ENCODE measurements at regions of chr3 and their contacts with region 1.

Region 1: GRCh38 chr3:194315088-194315964 is 35.8 kb downstream of the CPN2 start:
- DNase-seq: peak; percentile 67 to 97
- H3K4me3 ChIP-seq: peak overlapping the region; percentile 21
- CTCF ChIP-seq: peak in 1 of 3 donors; percentile 67
- POLR2A ChIP-seq: no peak

Region 2: DNA sequence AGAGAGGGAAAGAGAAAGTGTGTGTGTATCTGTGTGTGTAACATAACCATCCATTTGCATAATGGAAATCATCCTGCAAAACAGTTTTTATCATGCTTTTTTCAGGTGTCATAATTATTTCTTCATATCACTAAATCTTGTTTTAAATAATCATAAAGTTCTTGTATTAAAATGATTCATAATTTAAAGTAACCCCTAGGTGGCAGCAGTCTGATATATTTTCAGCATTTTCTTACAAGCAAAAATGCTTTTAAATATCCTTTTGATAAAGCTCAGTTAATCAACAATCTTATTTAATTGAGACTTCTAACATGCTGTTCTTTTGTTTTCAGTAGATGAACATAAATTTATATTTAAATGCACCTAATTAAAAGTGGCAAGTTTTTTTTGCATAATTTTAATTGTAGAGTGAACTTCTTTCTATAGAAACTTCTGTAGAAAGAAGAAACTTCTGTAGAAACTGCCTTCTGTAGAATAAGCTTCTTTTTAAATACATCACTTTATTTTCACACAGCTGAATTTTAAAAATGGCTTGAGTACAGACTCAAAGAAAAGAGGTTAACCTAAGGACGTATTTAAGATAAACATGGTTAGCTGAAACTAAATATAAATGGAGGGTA is 649.8 kb before region 1 on chr3:
- intact Hi-C with region 1: loop called (anchors 10 kb)
- DNase-seq: no peak
- H3K4me3 ChIP-seq: no peak overlapping the region
- CTCF ChIP-seq: no peak
- POLR2A ChIP-seq: no peak

Region 3: GRCh38 chr3:193780810-193781472 is 534.4 kb before region 1 on chr3:
- intact Hi-C with region 1: loop called (anchors 5 kb)
- DNase-seq: peak; percentile 62 to 91
- H3K4me3 ChIP-seq: no peak overlapping the region
- CTCF ChIP-seq: peak in 1 of 3 donors; percentile 54
- POLR2A ChIP-seq: no peak

Region 4: DNA sequence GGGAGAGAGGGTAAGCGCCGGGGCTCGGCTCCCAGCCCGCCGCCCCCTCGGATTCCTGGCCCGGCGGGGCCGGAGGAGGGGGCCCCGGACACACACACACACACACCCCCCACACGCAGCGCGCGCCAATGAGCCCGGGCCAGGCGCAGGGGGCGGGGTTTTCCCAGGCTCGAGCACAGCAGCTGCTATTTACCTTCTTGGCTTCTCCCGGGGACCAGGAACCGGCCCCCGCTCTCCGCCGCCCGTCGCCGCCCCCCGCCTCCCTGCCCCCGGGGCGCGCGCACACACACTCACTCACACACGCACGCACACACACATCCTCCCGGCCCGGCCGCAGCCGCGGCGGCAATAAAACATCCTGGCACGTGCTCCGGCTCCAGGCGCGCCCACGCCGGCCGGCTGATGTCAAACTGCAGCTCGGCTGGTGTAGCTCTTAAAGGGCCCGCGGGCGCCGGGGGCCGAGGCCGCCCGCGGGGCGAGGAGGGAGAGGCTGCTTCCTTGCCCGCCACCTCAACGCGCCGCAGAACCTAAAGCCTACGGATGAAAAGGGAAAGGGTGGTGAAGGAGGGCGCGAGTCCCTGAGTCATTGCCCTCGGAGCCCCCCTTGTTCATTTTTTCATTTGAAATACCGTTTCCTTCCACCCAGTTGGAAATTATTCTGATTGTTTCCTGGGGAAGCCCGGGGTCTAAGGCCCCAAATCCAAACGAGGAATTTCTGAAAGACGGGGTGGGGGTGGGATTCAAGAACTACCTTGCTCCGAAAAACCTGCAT is 180.4 kb before region 1 on chr3:
- intact Hi-C with region 1: loop called (anchors 10 kb)
- DNase-seq: peak; percentile 91 to 98
- H3K4me3 ChIP-seq: peak overlapping the region; percentile 40
- CTCF ChIP-seq: peak in 1 of 3 donors; percentile 75
- POLR2A ChIP-seq: no peak